ENCODE measurements at regions of chr22 and their contacts with region 1.

Region 1: DNA sequence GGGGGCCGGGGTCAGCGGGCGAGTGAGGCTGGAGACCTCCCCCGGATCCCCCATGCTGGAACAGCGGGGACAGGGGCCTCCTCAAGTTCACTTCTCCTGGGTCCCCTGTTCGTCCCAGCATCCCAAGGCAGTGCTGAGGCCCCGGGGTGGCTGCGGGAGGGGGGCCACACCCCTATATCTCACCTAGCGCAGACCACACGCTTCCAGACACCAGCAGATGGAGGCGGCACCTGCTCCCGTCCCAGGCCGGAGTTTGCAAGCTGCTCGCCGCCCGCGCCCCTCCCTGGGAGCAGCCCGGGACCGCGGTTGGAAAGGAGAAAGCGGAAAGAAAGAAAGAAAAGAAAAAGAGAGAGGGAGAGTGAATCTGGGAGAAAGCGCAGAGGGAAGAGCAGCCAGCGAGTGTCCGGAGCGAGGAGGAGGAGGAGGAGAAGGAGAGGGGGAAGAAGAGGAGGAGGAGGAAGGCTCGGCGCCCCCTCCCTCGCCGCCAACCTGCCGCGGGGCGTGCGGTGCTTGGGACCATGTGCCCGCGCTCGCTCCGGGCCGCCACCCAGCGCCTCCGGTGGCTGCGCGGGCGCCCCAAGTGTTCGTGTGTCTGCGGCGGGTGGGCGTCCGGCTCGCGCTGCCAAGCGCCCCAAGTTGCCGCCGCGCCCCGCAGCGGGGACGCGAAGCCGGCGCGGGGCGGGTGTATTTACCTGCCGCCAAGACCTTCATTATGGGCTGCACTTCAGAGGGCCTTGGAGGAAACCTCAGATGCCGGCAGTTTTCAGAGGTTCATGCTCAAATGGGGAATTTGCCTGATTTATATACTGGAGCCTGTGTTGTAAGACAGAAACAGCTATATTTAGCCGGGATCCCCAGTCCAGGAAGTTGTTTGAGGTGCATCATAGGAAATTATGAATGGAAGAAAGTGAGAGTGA is at the start of gene LIF:
- DNase-seq: peak; percentile 38
- H3K4me3 Mint-ChIP-seq: peak within 1 kb of the TSS; percentile 91
- H3K27ac Mint-ChIP-seq: peak within 1 kb of the TSS; percentile 97
- H3K4me1 Mint-ChIP-seq: peaks cover 30% of the 10 kb centered on the region
- H3K27me3 Mint-ChIP-seq: no peaks in the 10 kb centered on the region
- CTCF ChIP-seq: peak; percentile 9
- total RNA-seq, gene LIF: 9.5 and 19.3 TPM in 2 replicates

Region 2: GRCh38 chr22:30196141-30196879 is 49.9 kb before region 1 on chr22:
- CTCF ChIA-PET with region 1: interaction called, 3 read pairs
- POLR2A ChIA-PET with region 1: interaction called, 6 read pairs
- intact Hi-C with region 1: loop called (anchors 2 kb)
- DNase-seq: peak; percentile 98
- H3K4me3 Mint-ChIP-seq: peak overlapping the region; percentile 66
- H3K27ac Mint-ChIP-seq: peak overlapping the region; percentile 96
- H3K4me1 Mint-ChIP-seq: peaks cover 33% of the 10 kb centered on the region
- H3K27me3 Mint-ChIP-seq: no peaks in the 10 kb centered on the region
- CTCF ChIP-seq: no peak

Region 3: DNA sequence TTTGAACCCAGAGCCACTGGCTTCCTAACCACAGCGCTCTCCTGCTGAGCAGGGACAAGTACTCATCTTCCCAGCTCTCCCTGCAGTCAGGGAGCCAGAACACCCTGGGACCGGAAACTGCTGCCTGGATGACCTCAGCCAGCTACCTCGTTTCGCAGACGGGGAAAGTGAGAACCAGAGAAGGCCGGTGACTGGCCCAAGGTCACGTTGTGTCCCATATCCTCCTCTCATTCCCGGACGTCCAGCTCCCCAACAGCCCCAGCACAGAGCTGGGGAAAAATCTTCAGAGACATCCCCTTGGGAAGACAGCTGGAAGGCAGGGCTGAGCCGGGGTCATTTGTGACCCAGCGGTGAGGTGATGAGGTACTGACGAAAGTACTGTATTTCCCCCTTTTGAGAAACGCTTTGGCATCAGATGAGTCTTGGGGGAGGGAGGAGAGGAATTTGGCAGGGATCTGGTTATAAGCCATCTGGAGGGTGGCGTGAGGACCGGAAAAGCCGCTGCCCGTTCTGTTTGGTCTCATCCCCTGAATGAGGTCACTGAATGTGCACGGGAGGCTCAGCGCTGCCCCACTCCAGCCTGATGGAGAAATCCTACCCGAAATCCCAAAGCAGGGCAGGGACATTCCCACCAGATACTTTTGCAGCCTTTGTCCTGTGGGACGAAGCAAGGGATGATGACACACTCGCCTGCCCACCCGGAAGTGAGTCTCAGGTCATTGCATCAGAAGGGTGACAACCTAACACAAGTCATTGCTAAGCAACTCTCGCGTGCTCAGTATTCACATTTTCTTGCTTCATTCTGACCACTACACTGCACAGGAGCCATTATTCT is 40.7 kb before region 1 on chr22:
- CTCF ChIA-PET with region 1: interaction called, 5 read pairs
- POLR2A ChIA-PET with region 1: interaction called, 5 read pairs
- intact Hi-C with region 1: loop called (anchors 2 kb)
- DNase-seq: peak; percentile 95
- H3K4me3 Mint-ChIP-seq: peak overlapping the region; percentile 57
- H3K27ac Mint-ChIP-seq: peak overlapping the region; percentile 75
- H3K4me1 Mint-ChIP-seq: peaks cover 49% of the 10 kb centered on the region
- H3K27me3 Mint-ChIP-seq: no peaks in the 10 kb centered on the region
- CTCF ChIP-seq: no peak